Activated CD4-positive, alpha-beta memory T cell treated with anti-CD3 and anti-CD28 coated beads, Interleukin-2, amount 10 ng/mL, durations not matched to agents 7 days and 5 days (primary cell): ENCODE measurements at regions of chr13 and their contacts with region 1.

Region 1: GRCh38 chr13:33542283-33543088 is 256.9 kb upstream of the STARD13 start:
- DNase-seq: peak; percentile 99
- H3K4me3 Mint-ChIP-seq: peak overlapping the region; percentile 76
- H3K27ac Mint-ChIP-seq: peak overlapping the region; percentile 99
- H3K4me1 Mint-ChIP-seq: peaks cover 33% of the 10 kb centered on the region
- H3K27me3 Mint-ChIP-seq: no peaks in the 10 kb centered on the region

Region 2: GRCh38 chr13:33610471-33611015 is 68.1 kb after region 1 on chr13:
- CTCF ChIA-PET with region 1: interaction called, 7 read pairs
- POLR2A ChIA-PET with region 1: interaction called, 30 read pairs
- DNase-seq: peak; percentile 78
- H3K4me3 Mint-ChIP-seq: peak overlapping the region; percentile 80
- H3K27ac Mint-ChIP-seq: peak overlapping the region; percentile 97
- H3K4me1 Mint-ChIP-seq: peaks cover 41% of the 10 kb centered on the region
- H3K27me3 Mint-ChIP-seq: no peaks in the 10 kb centered on the region

Region 3: GRCh38 chr13:33678906-33679657 is 136.6 kb after region 1 on chr13:
- CTCF ChIA-PET with region 1: interaction called, 11 read pairs
- POLR2A ChIA-PET with region 1: interaction called, 48 read pairs
- DNase-seq: peak; percentile 82
- H3K4me3 Mint-ChIP-seq: peak overlapping the region; percentile 75
- H3K27ac Mint-ChIP-seq: peak overlapping the region; percentile 86
- H3K4me1 Mint-ChIP-seq: peaks cover 48% of the 10 kb centered on the region
- H3K27me3 Mint-ChIP-seq: no peaks in the 10 kb centered on the region

Region 4: DNA sequence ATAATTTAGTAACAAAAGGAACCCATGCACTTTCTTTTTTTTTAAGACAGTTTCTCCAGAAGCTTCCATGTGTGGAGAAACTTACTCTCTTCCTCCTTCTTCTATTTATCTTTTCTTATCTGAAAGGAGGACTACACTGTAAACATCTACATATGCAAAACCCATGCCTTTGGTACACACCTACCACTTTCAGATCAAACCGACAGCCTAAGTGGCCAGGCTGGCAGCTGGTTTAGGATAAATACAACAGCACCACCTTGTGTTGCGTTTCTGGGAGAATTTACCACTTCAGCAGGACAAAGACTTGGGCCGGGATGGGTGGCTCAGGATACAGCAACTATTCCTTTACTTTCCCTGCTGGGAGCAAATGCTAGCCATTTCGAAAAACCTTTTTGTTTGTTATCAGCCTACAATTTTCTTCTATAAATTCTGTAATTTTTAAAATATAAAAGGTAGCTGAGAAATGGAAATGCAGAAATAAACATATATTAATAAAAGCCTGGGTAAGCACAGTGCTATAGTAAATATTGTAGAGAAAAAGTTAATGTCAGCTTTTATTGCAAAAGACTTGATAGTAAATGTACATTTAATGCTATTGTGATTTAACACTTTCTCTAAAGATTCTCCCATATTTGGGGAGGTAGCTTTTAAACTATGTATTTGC is 181.4 kb after region 1 on chr13:
- CTCF ChIA-PET with region 1: interaction called, 43 read pairs
- POLR2A ChIA-PET with region 1: interaction called, 31 read pairs
- DNase-seq: peak; percentile 76
- H3K4me3 Mint-ChIP-seq: no peak overlapping the region
- H3K27ac Mint-ChIP-seq: peak overlapping the region; percentile 17
- H3K4me1 Mint-ChIP-seq: peaks cover 32% of the 10 kb centered on the region
- H3K27me3 Mint-ChIP-seq: no peaks in the 10 kb centered on the region

Region 5: GRCh38 chr13:33817901-33818706 is 275.6 kb after region 1 on chr13 and contains the start of gene RFC3:
- CTCF ChIA-PET with region 1: interaction called, 9 read pairs
- POLR2A ChIA-PET with region 1: interaction called, 28 read pairs
- DNase-seq: peak; percentile 95
- H3K4me3 Mint-ChIP-seq: peak within 1 kb of the TSS; percentile 98
- H3K27ac Mint-ChIP-seq: peak within 1 kb of the TSS; percentile 84
- H3K4me1 Mint-ChIP-seq: peaks cover 51% of the 10 kb centered on the region
- H3K27me3 Mint-ChIP-seq: peaks cover 3% of the 10 kb centered on the region
- total RNA-seq, gene RFC3: 34.9 to 35.2 TPM